ENCODE measurements at regions of chr5 and their contacts with region 1.

Region 1: DNA sequence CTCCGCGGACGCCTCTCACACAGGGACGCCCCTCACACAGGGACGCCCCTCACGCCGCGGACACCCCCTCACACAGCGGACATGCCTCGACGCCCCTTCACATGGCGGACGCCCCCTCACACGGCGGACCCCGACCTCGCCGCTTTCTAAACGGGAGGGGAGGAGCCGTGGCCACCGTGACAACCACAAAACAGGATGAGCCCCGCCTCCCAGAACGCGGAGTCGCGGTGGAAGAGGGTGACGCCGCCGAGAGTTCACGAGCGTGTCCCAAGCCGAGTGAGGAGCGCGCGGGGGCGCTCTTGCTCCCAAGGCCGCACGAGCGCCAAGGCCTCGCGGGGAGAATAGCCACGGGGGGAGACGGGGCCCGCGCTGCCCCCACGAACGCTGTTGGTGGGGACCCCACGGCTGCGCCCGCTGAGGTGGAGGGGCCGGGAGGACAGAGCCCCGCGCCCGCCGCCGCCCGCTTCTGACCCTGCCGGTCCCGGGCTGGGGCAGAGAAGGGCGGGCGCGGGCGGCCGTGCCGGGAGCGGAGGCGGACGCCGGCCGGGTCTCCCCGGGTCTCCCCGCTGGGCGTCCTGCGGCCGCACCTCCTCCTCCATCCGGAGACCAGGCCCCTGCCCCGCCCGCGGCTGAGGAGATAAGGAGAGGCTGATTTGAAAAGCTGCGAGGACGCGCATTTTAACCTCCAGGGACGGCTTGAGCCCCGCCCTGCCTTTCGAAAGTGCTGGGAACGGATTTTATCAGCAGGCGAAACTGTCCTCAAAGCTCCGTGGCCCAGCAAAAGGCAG is 3.9 kb upstream of the NKD2 start:
- DNase-seq: peak; percentile 45 to 73
- ATAC-seq: peak; percentile 64 to 79 (median 74)
- H3K4me3 ChIP-seq: no peak overlapping the region
- H3K4me3 Mint-ChIP-seq: peak overlapping the region; percentile 82
- H3K27ac ChIP-seq: no peak overlapping the region
- H3K27ac Mint-ChIP-seq: peak overlapping the region in 1 of 2 donors; percentile 71
- H3K4me1 ChIP-seq: peaks cover 17% of the 10 kb centered on the region
- H3K4me1 Mint-ChIP-seq: peaks cover 0 to 16% of the 10 kb centered on the region in 2 donors
- H3K27me3 ChIP-seq: peaks cover 22% of the 10 kb centered on the region
- H3K27me3 Mint-ChIP-seq: peaks cover 29 to 31% of the 10 kb centered on the region in 2 donors
- CTCF ChIP-seq: peak; percentile 35

Region 2: GRCh38 chr5:963673-964531 is 40.8 kb before region 1 on chr5:
- intact Hi-C with region 1: loop called (anchors 5 kb)
- DNase-seq: peak; percentile 30 to 74
- ATAC-seq: peak; percentile 62 to 74 (median 66)
- H3K4me3 ChIP-seq: no peak overlapping the region
- H3K4me3 Mint-ChIP-seq: peak overlapping the region; percentile 66
- H3K27ac ChIP-seq: peak overlapping the region; percentile 8
- H3K27ac Mint-ChIP-seq: peak overlapping the region; percentile 68 to 87
- H3K4me1 ChIP-seq: peaks cover 25% of the 10 kb centered on the region
- H3K4me1 Mint-ChIP-seq: peaks cover 28 to 37% of the 10 kb centered on the region in 2 donors
- H3K27me3 ChIP-seq: peaks cover 2% of the 10 kb centered on the region
- H3K27me3 Mint-ChIP-seq: peaks cover 31% of the 10 kb centered on the region in 2 donors
- CTCF ChIP-seq: no peak

Region 3: DNA sequence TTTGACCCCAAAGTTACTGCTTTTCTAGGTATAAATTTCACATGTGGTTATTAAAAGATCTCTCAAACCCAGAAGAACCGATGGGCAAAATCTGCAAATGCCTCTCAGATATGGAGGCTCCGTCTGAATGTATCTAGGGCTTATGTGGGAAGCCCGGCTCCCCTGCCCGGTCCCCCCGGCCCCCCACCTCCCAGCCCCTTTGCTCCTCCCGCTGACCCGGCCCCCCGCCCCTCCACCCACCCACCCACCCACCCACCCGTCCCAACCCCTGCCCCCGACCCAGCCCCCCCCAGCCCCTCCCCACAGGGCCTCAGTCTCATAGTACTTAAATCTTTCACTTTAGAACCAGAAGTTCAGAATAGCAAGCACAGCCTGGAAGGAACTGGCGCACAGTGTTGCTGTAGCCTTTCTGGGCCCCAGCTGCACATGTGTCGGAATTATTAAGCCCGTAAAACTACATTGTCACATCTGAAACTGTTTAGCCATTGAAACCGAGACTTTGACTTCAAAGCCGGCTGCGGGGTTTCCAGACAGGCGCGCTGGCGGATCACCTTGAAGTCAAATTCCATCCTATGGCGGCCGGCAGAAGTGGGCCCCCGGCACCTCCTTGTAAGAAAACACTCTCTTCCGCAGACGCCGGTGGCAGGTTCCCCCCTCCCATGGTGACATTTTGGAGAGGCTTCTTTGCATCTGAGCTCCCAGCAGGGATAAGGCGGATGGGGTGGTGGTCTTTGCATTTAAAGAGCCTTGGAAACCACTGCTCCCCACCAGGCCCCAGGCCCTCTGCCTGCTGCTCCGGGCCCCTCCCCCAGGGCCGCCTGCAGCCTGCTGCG is 16.7 kb after region 1 on chr5:
- intact Hi-C with region 1: no loop called
- DNase-seq: no peak
- ATAC-seq: no peak
- H3K4me3 ChIP-seq: no peak overlapping the region
- H3K4me3 Mint-ChIP-seq: no peak overlapping the region
- H3K27ac ChIP-seq: no peak overlapping the region
- H3K27ac Mint-ChIP-seq: no peak overlapping the region
- H3K4me1 ChIP-seq: no peaks in the 10 kb centered on the region
- H3K4me1 Mint-ChIP-seq: no peaks in the 10 kb centered on the region
- H3K27me3 ChIP-seq: no peaks in the 10 kb centered on the region
- H3K27me3 Mint-ChIP-seq: no peaks in the 10 kb centered on the region
- CTCF ChIP-seq: no peak

Region 4: GRCh38 chr5:1140171-1140817 is 135.6 kb after region 1 on chr5:
- intact Hi-C with region 1: loop called (anchors 10 kb)
- DNase-seq: peak; percentile 75 to 83
- ATAC-seq: peak; percentile 54 to 96 (median 89)
- H3K4me3 ChIP-seq: no peak overlapping the region
- H3K4me3 Mint-ChIP-seq: no peak overlapping the region
- H3K27ac ChIP-seq: no peak overlapping the region
- H3K27ac Mint-ChIP-seq: peak overlapping the region in 1 of 2 donors; percentile 44
- H3K4me1 ChIP-seq: peaks cover 14% of the 10 kb centered on the region
- H3K4me1 Mint-ChIP-seq: peaks cover 0 to 27% of the 10 kb centered on the region in 2 donors
- H3K27me3 ChIP-seq: no peaks in the 10 kb centered on the region
- H3K27me3 Mint-ChIP-seq: peaks cover 0 to 13% of the 10 kb centered on the region in 2 donors
- CTCF ChIP-seq: peak; percentile 77

Measured in natural killer cell (primary cell).